WTC11 (cell line): ENCODE measurements at regions of chr1 and their contacts with region 1.

Region 1: GRCh38 chr1:101357444-101357986 is 120.7 kb downstream of the S1PR1 start:
- DNase-seq: peak; percentile 64
- ATAC-seq: peak; percentile 98
- H3K4me3 Mint-ChIP-seq: no peak overlapping the region
- H3K27ac Mint-ChIP-seq: no peak overlapping the region
- H3K4me1 Mint-ChIP-seq: peaks cover 6% of the 10 kb centered on the region; the same call in 1 of the 2 replicates
- H3K27me3 Mint-ChIP-seq: no peaks in the 10 kb centered on the region
- CTCF ChIP-seq: peak; percentile 75

Region 2: DNA sequence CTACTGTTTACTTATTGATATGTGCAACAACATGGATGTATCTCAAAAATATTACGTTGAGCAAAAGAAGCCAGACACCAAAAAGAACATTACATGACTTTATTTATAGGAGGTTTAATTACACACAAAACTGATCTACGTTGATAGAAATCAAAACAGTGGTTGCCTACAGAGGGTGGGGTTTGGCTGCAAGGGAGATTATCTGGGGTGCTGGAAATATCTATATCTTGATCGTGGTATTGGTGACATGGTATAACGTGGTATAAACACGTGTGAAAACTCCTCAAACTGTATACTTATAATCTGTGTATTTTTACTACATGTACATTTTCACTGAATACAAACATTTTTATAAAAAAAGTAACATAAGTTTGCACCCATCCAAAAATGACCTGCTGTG is 81.8 kb before region 1 on chr1:
- CTCF ChIA-PET with region 1: no interaction called
- POLR2A ChIA-PET with region 1: no interaction called
- DNase-seq: no peak
- ATAC-seq: no peak
- H3K4me3 Mint-ChIP-seq: no peak overlapping the region
- H3K27ac Mint-ChIP-seq: no peak overlapping the region
- H3K4me1 Mint-ChIP-seq: peaks cover 5% of the 10 kb centered on the region
- H3K27me3 Mint-ChIP-seq: no peaks in the 10 kb centered on the region
- CTCF ChIP-seq: no peak

Region 3: GRCh38 chr1:101325144-101325543 is 32.4 kb before region 1 on chr1:
- CTCF ChIA-PET with region 1: interaction called, 13 read pairs
- POLR2A ChIA-PET with region 1: no interaction called
- DNase-seq: no peak
- ATAC-seq: no peak
- H3K4me3 Mint-ChIP-seq: no peak overlapping the region
- H3K27ac Mint-ChIP-seq: no peak overlapping the region
- H3K4me1 Mint-ChIP-seq: peaks cover 22% of the 10 kb centered on the region
- H3K27me3 Mint-ChIP-seq: no peaks in the 10 kb centered on the region
- CTCF ChIP-seq: no peak

Region 4: DNA sequence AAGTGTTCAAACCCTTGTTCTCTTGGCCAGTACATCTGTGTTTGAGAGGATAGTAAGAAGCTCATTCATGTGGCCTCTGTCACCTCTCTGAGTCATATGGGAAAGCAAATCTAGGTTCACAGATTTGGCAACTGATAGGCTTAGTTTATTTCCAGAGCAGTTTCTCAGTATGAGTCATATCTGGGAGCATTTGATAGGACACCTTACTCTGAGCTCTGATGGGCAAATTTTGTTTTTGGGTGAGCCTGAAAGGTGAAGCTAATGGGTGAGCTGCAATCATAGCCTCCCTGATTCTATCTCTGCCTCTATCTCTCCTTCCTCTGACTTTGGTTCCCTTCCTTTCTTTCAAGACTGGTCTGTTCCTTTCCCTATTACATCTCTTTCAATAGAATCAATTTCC is 13.7 kb after region 1 on chr1:
- CTCF ChIA-PET with region 1: interaction called, 24 read pairs
- POLR2A ChIA-PET with region 1: no interaction called
- DNase-seq: no peak
- ATAC-seq: no peak
- H3K4me3 Mint-ChIP-seq: no peak overlapping the region
- H3K27ac Mint-ChIP-seq: no peak overlapping the region
- H3K4me1 Mint-ChIP-seq: peaks cover 5% of the 10 kb centered on the region; the same call in 1 of the 2 replicates
- H3K27me3 Mint-ChIP-seq: no peaks in the 10 kb centered on the region
- CTCF ChIP-seq: no peak

Region 5: DNA sequence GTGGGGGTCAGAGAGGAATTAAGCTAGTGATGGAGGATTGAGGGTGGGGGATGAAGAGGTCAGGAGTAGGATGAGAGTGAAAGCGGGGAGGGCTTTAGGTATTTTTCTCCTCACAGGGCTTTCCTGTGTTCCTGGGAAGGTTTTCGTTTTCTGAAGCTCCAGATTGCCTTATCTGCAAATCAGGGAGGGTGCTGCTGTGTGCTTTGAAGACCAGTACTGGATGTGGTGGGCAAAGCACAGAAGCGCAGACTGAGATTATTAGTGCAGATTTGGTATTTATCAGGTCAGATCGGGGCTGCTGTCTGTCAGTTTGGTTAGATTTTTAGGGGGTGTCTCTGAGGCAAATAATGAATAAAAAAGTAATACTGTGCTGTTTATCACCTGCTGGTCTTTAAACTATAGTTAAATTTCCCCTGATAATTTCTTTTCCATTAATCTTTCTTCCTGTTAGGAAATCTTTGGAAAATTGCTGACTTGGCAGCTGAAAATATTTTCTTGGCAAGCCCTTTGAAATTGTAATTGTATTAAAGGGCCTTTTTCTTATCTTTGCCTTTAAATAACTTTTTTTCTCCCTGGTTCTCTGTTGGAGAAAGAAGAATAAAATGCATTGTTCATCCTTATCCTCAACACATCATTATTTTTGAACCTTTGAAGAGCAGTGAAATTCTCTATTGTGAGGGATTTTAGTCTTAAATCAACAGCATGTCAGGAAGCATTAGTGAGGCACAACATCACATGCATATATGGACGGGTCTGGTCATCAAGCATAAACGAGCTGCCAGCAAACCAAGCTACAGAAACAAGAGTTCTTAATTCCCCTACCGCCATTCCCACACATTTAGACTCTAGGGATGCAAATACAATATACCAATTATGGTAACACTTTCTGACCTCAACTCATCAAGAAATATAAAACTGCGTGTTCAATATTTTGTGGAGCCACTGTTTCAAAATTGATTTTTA is 18.9 kb after region 1 on chr1:
- CTCF ChIA-PET with region 1: interaction called, 24 read pairs
- POLR2A ChIA-PET with region 1: no interaction called
- DNase-seq: no peak
- ATAC-seq: no peak
- H3K4me3 Mint-ChIP-seq: no peak overlapping the region
- H3K27ac Mint-ChIP-seq: no peak overlapping the region
- H3K4me1 Mint-ChIP-seq: peaks cover 41% of the 10 kb centered on the region
- H3K27me3 Mint-ChIP-seq: no peaks in the 10 kb centered on the region
- CTCF ChIP-seq: no peak